ENCODE measurements at regions of chr17 and their contacts with region 1.

Region 1: DNA sequence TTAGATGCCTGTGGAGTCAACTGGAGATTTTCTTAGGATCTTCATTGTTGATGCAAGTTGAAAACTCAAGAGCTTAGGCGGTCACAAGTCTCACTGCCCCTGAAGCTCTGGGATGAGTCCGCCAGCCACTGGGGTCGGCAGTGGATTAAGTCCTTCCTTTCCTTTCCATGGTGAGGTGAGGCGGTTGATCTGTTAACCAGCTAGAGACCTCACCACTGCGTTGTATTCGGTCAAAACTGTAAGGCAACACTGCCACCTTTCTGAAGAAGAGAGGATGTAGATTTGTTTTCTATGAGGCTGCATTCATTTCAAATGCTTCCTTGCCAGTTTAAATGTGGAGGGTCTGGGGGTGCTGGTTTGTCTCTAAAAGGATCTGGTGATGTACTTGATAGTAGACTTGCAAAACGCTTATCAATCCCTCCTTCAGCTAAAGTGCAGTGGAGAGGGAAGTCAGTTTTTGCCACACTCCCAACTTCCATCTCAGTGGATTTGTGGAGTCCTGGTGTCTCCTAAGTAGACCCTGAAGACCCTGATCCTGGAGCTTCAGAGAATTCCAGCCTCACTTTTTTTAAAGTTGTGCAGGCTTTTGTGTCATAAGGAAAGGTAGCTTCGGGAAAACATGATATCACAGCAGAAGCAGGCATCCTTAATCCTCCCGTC is 1.7 kb downstream of the MYOCD start:
- DNase-seq: no peak
- ATAC-seq: peak; percentile 76
- H3K4me3 ChIP-seq: peak overlapping the region; percentile 84 to 87
- H3K27ac ChIP-seq: peak overlapping the region; percentile 85 to 91
- H3K4me1 ChIP-seq: peaks cover 0 to 6% of the 10 kb centered on the region in 2 donors
- H3K27me3 ChIP-seq: no peaks in the 10 kb centered on the region

Region 2: GRCh38 chr17:12256380-12256995 is 410.9 kb before region 1 on chr17:
- intact Hi-C with region 1: loop called (anchors 2 to 5 kb)
- DNase-seq: no peak
- ATAC-seq: peak; percentile 77
- H3K4me3 ChIP-seq: peak overlapping the region; percentile 23 to 35
- H3K27ac ChIP-seq: no peak overlapping the region
- H3K4me1 ChIP-seq: no peaks in the 10 kb centered on the region
- H3K27me3 ChIP-seq: no peaks in the 10 kb centered on the region

Region 3: GRCh38 chr17:12627177-12627629 is 40.2 kb before region 1 on chr17:
- intact Hi-C with region 1: loop called (anchors 2 to 5 kb)
- DNase-seq: peak; percentile 84 to 87
- ATAC-seq: peak; percentile 90
- H3K4me3 ChIP-seq: peak overlapping the region in 1 of 2 donors; percentile 13
- H3K27ac ChIP-seq: peak overlapping the region; percentile 85 to 93
- H3K4me1 ChIP-seq: peaks cover 3 to 6% of the 10 kb centered on the region in 2 donors
- H3K27me3 ChIP-seq: no peaks in the 10 kb centered on the region

Region 4: GRCh38 chr17:12719948-12720347 is 52.5 kb after region 1 on chr17:
- intact Hi-C with region 1: no loop called
- DNase-seq: no peak
- ATAC-seq: no peak
- H3K4me3 ChIP-seq: no peak overlapping the region
- H3K27ac ChIP-seq: peak overlapping the region in 1 of 2 donors; percentile 14
- H3K4me1 ChIP-seq: peaks cover 0 to 4% of the 10 kb centered on the region in 2 donors
- H3K27me3 ChIP-seq: no peaks in the 10 kb centered on the region

Region 5: GRCh38 chr17:12744298-12744697 is 76.9 kb after region 1 on chr17:
- intact Hi-C with region 1: loop called in 1 of 2 experiments (anchors 2 kb)
- DNase-seq: no peak
- ATAC-seq: peak; percentile 53
- H3K4me3 ChIP-seq: no peak overlapping the region
- H3K27ac ChIP-seq: peak overlapping the region in 1 of 2 donors; percentile 42
- H3K4me1 ChIP-seq: peaks cover 4 to 5% of the 10 kb centered on the region in 2 donors
- H3K27me3 ChIP-seq: no peaks in the 10 kb centered on the region